ENCODE measurements at regions of chrX and their contacts with region 1.

Region 1: GRCh38 chrX:57651169-57651919 is 28.7 kb downstream of the NLRP2B start:
- DNase-seq: peak; percentile 84 to 95
- H3K4me3 ChIP-seq: no peak overlapping the region
- H3K4me1 ChIP-seq: peaks cover 36% of the 10 kb centered on the region
- H3K27me3 ChIP-seq: no peaks in the 10 kb centered on the region

Region 2: DNA sequence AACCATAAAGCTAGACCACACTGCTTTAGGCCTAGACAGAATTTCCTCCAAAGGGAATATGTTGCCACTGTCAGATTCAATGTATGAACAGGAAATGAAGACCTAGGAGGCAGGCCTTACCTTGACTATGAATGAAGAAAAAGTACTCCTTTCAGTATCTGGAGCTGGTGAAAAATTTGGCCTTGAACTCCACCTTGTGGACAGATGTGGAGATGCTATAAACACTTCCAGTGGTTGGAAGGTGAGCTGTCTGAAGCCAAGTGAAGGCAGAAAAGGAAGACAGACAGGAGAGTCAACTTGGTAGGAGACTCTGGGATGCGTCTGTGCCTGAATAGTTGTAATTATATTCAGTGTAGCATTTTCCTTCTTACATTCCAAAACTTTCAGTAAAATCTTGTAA is 673.2 kb before region 1 on chrX:
- in situ Hi-C with region 1: no loop called
- DNase-seq: peak; percentile 49 to 50
- H3K4me3 ChIP-seq: no peak overlapping the region
- H3K4me1 ChIP-seq: no peaks in the 10 kb centered on the region
- H3K27me3 ChIP-seq: no peaks in the 10 kb centered on the region

Region 3: GRCh38 chrX:57772637-57773036 is 121.3 kb after region 1 on chrX:
- in situ Hi-C with region 1: loop called (anchors 25 kb)
- DNase-seq: peak; percentile 8 to 17
- H3K4me3 ChIP-seq: no peak overlapping the region
- H3K4me1 ChIP-seq: no peaks in the 10 kb centered on the region
- H3K27me3 ChIP-seq: no peaks in the 10 kb centered on the region